CD4-positive, alpha-beta memory T cell (primary cell): ENCODE measurements at regions of chr6 and their contacts with region 1.

Region 1: GRCh38 chr6:69487688-69488087 is 309.1 kb downstream of the LMBRD1 start:
- DNase-seq: no peak
- H3K4me3 ChIP-seq: no peak overlapping the region
- H3K4me3 Mint-ChIP-seq: no peak overlapping the region
- H3K27ac ChIP-seq: no peak overlapping the region
- H3K27ac Mint-ChIP-seq: no peak overlapping the region
- H3K4me1 ChIP-seq: no peaks in the 10 kb centered on the region
- H3K4me1 Mint-ChIP-seq: no peaks in the 10 kb centered on the region
- H3K27me3 ChIP-seq: no peaks in the 10 kb centered on the region
- H3K27me3 Mint-ChIP-seq: peaks cover 0 to 2% of the 10 kb centered on the region in 2 donors

Region 2: GRCh38 chr6:68634726-68635411 is 852.8 kb before region 1 on chr6 and contains the start of gene ADGRB3:
- CTCF ChIA-PET with region 1: no interaction called
- POLR2A ChIA-PET with region 1: no interaction called
- intact Hi-C with region 1: loop called (anchors 10 kb)
- DNase-seq: peak; percentile 13 to 41 (median 27)
- H3K4me3 ChIP-seq: peak within 1 kb of the TSS; percentile 24 to 31
- H3K4me3 Mint-ChIP-seq: peak within 1 kb of the TSS; percentile 81 to 92 (median 88)
- H3K27ac ChIP-seq: no peak within 1 kb of the TSS
- H3K27ac Mint-ChIP-seq: peak within 1 kb of the TSS in 3 of 7 donors; percentile 19 to 26 (median 25)
- H3K4me1 ChIP-seq: peaks cover 10% of the 10 kb centered on the region
- H3K4me1 Mint-ChIP-seq: peaks cover 8 to 26% (median 22%) of the 10 kb centered on the region in 4 donors
- H3K27me3 ChIP-seq: peaks cover 7% of the 10 kb centered on the region
- H3K27me3 Mint-ChIP-seq: peaks cover 32 to 34% of the 10 kb centered on the region in 2 donors
- total RNA-seq, gene ADGRB3: not detected

Region 3: DNA sequence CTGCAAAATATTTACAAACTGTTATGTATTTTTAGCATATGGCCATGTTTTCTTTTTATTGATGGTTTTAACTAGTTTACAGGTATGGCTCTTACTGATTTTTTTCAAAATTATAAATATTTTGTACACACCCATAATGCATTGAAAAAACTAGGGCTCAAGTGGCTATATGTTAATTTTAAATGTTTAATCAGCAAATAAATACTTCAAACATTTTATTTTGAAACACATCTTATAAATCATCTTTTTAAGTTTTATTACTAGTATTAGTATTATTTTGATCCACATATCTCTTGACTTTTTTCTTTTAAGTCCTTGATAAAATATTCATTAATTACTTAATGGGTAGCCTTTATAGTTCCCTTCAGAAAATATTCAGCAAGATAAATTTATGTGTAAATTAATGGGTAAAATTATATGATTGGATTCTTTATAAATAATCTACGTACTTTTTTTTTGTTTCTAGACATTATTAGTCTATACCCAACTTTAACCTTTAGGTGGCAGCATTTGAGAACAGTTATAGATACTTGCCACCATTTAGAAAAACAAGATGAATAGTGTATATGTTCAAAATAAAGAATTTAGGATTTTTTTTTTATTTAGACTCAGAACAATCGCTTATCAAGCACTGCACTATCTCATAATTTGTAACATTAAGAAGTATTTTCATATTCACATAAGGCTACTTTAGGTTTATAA is 610.7 kb before region 1 on chr6:
- CTCF ChIA-PET with region 1: no interaction called
- POLR2A ChIA-PET with region 1: no interaction called
- intact Hi-C with region 1: loop called (anchors 5 kb)
- DNase-seq: no peak
- H3K4me3 ChIP-seq: no peak overlapping the region
- H3K4me3 Mint-ChIP-seq: no peak overlapping the region
- H3K27ac ChIP-seq: no peak overlapping the region
- H3K27ac Mint-ChIP-seq: no peak overlapping the region
- H3K4me1 ChIP-seq: no peaks in the 10 kb centered on the region
- H3K4me1 Mint-ChIP-seq: no peaks in the 10 kb centered on the region
- H3K27me3 ChIP-seq: no peaks in the 10 kb centered on the region
- H3K27me3 Mint-ChIP-seq: no peaks in the 10 kb centered on the region